Activated CD4-positive, alpha-beta T cell treated with anti-CD3 and anti-CD28 coated beads, Interleukin-2, amount 10 ng/mL, durations not matched to agents 24 days and 14 days (primary cell): ENCODE measurements at regions of chr3 and their contacts with region 1.

Region 1: DNA sequence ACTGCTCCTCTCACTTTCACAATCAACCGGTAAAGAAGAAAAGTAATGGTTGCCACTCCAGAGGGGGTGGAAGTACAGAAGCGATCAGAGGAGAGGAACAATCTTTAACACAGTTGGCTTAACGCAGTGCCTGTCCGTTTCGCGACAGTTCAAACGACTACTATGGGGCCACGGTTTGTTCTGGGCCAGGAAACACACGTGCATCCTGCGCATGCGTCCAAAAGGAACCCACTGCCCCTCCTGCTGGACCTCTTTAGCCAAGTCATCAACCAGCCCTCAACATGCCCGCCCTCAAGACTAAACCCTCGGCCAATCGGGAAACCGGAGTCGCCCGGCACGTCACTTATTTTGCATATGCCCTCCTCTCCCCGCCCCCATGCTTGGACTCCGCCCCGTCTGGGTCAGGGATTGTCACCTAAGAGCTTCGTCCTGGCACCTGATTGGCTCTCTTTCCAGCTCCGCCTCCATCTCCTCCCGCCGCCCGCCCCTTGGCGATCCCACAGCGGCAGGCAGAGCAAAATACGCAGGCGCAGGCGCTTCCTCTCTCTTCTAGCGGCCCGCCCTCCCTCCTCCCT is 345 bp upstream of the CDV3 start:
- DNase-seq: peak; percentile 100
- H3K4me3 Mint-ChIP-seq: peak overlapping the region; percentile 85
- H3K27ac Mint-ChIP-seq: peak overlapping the region; percentile 99
- H3K4me1 Mint-ChIP-seq: peaks cover 46% of the 10 kb centered on the region
- H3K27me3 Mint-ChIP-seq: no peaks in the 10 kb centered on the region

Region 2: GRCh38 chr3:132416807-132417694 is 1156.1 kb before region 1 on chr3 and contains the start of gene DNAJC13:
- intact Hi-C with region 1: loop called (anchors 2 kb)
- DNase-seq: peak; percentile 97
- H3K4me3 Mint-ChIP-seq: peak within 1 kb of the TSS; percentile 98
- H3K27ac Mint-ChIP-seq: peak within 1 kb of the TSS; percentile 95
- H3K4me1 Mint-ChIP-seq: peaks cover 25% of the 10 kb centered on the region
- H3K27me3 Mint-ChIP-seq: peaks cover 3% of the 10 kb centered on the region
- total RNA-seq, gene DNAJC13: 33.6 and 34.0 TPM in 2 replicates

Region 3: DNA sequence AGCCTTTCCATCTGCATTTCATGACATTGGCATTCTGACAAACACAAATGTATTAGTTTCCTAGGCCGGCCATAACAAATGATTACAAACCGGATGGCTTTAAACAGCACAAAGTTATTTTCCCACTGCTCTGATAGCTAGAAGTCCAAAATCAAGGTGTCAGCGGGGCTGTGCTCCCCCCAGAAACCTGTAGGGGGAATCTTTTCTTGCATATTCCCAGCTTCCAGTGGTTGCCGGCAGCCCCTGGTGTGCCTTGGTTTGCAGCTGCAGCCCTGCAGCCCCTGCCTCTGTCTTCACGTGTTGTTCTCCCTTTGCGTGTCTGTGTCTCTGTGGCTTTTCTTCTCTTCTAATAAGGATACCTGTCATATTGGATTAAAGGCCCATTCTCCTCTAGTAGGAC is 78.7 kb before region 1 on chr3:
- intact Hi-C with region 1: loop called (anchors 1 kb)
- DNase-seq: no peak
- H3K4me3 Mint-ChIP-seq: no peak overlapping the region
- H3K27ac Mint-ChIP-seq: no peak overlapping the region
- H3K4me1 Mint-ChIP-seq: peaks cover 33% of the 10 kb centered on the region
- H3K27me3 Mint-ChIP-seq: no peaks in the 10 kb centered on the region

Region 4: GRCh38 chr3:133595341-133595740 is 22.2 kb after region 1 on chr3:
- intact Hi-C with region 1: loop called (anchors 1 kb)
- DNase-seq: no peak
- H3K4me3 Mint-ChIP-seq: no peak overlapping the region
- H3K27ac Mint-ChIP-seq: peak overlapping the region; percentile 59
- H3K4me1 Mint-ChIP-seq: peaks cover 20% of the 10 kb centered on the region
- H3K27me3 Mint-ChIP-seq: no peaks in the 10 kb centered on the region

Region 5: GRCh38 chr3:133805527-133806475 is 232.7 kb after region 1 on chr3 and contains the start of gene SRPRB:
- intact Hi-C with region 1: loop called (anchors 1 kb)
- DNase-seq: peak; percentile 98
- H3K4me3 Mint-ChIP-seq: peak within 1 kb of the TSS; percentile 99
- H3K27ac Mint-ChIP-seq: peak within 1 kb of the TSS; percentile 98
- H3K4me1 Mint-ChIP-seq: peaks cover 17% of the 10 kb centered on the region
- H3K27me3 Mint-ChIP-seq: peaks cover 16% of the 10 kb centered on the region
- total RNA-seq, gene SRPRB: 97.7 and 103 TPM in 2 replicates

Region 6: GRCh38 chr3:134485718-134486576 is 912.8 kb after region 1 on chr3 and contains the starts of genes ANAPC13 and CEP63:
- intact Hi-C with region 1: loop called (anchors 5 kb)
- DNase-seq: peak; percentile 97
- H3K4me3 Mint-ChIP-seq: peak within 1 kb of the TSS; percentile 85
- H3K27ac Mint-ChIP-seq: peak within 1 kb of the TSS; percentile 98
- H3K4me1 Mint-ChIP-seq: peaks cover 38% of the 10 kb centered on the region
- H3K27me3 Mint-ChIP-seq: no peaks in the 10 kb centered on the region
- total RNA-seq, gene ANAPC13: 29.7 and 30.0 TPM in 2 replicates
- total RNA-seq, gene CEP63: 18.6 and 20.5 TPM in 2 replicates